Heart right ventricle (tissue), 16 donors: ENCODE measurements at regions of chr3 and their contacts with region 1.

Region 1: DNA sequence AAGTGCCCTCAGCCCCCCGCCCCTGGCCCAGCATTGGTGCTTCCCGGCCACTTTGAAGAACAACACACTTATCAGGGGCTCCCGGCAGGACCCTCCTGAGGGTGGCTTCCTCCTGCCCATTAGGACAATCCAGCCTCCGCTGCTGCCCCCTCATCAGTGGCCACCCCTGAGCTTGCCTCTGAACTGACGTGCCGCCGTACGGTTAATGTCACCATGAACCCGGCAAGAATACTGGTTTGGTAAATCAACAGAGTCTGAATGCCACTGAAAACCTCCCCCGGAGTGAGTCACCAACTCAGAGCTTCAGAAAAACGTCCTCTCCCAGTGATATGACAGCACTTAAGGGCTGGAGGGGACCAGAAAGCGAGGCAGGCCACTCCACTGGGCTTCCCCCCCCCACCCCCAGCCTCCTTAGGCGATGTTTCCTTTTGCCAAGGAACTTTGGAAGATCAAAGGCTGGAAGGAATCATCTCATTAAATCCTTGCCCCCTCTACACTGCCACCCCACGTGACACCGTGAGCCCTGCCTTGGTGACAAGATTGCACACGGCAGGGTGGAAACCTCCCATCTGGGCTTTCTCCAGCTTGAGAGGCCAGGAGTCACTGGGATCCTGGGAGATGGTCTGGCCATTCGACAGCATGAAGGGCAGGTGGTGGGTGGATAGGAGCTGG is 142.1 kb downstream of the NUP210 start:
- DNase-seq: no peak
- ATAC-seq: no peak
- H3K4me3 ChIP-seq: no peak overlapping the region
- H3K27ac ChIP-seq: peak overlapping the region in 9 of 10 donors; percentile 32 to 78 (median 67)
- H3K4me1 ChIP-seq: peaks cover 0 to 34% (median 21%) of the 10 kb centered on the region in 9 donors
- H3K27me3 ChIP-seq: peaks cover 0 to 35% (median 13%) of the 10 kb centered on the region in 7 donors
- CTCF ChIP-seq: no peak

Region 2: GRCh38 chr3:13161024-13161759 is 116.8 kb before region 1 on chr3:
- intact Hi-C with region 1: no loop called
- DNase-seq: no peak
- ATAC-seq: peak in 1 of 8 donors; percentile 16
- H3K4me3 ChIP-seq: no peak overlapping the region
- H3K27ac ChIP-seq: no peak overlapping the region
- H3K4me1 ChIP-seq: no peaks in the 10 kb centered on the region
- H3K27me3 ChIP-seq: peaks cover 0 to 11% (median 0%) of the 10 kb centered on the region in 7 donors
- CTCF ChIP-seq: no peak

Region 3: DNA sequence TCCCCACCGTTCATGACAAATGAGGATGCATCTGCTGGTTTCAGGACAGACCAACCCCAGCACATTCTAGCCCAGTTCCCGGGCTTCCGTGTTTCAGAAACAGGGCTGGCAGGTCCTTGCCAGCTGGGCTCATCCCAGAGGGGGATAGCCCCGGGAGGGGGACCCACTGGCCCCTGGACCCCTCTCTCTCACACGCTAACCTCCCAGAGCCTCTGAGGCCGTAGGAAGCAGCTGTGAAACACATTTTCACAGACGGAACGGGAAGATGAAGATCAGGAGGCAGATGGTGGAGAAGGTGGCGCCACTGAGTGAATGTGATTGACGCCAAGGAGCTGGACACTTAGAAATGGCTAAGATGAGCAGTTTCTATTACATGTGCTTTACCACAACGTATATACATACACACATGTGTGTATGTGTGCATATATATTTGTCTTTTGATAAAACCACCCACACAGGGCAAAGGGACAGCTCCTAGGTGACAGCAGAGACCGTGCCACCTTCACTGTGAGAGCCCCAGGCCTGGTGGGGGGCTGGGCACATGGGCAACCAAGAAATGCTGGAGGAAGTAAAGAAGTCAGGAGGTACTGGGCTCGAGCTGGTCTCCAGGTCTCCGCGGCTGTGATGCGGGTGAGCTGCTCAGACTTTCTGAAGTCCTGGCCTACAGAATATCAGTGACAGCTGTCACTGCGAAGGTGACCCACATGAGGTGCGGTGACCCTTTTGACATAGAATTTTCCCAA is 36.2 kb before region 1 on chr3:
- intact Hi-C with region 1: loop called in 1 of 10 experiments (anchors 5 kb)
- DNase-seq: no peak
- ATAC-seq: no peak
- H3K4me3 ChIP-seq: no peak overlapping the region
- H3K27ac ChIP-seq: no peak overlapping the region
- H3K4me1 ChIP-seq: no peaks in the 10 kb centered on the region
- H3K27me3 ChIP-seq: no peaks in the 10 kb centered on the region
- CTCF ChIP-seq: no peak